Activated CD4-positive, alpha-beta T cell treated with anti-CD3 and anti-CD28 coated beads, Interleukin-2, amount 10 ng/mL, durations not matched to agents 7 days and 5 days (primary cell): ENCODE measurements at regions of chr6 and their contacts with region 1.

Region 1: GRCh38 chr6:90472744-90473143 is 114.1 kb downstream of the MAP3K7 start:
- DNase-seq: peak; percentile 74
- H3K4me3 Mint-ChIP-seq: peak overlapping the region; percentile 54
- H3K27ac Mint-ChIP-seq: peak overlapping the region; percentile 94
- H3K4me1 Mint-ChIP-seq: peaks cover 98% of the 10 kb centered on the region
- H3K27me3 Mint-ChIP-seq: peaks cover 3% of the 10 kb centered on the region

Region 2: GRCh38 chr6:90296346-90297114 is 176.2 kb before region 1 on chr6 and contains the start of gene BACH2:
- CTCF ChIA-PET with region 1: interaction called, 11 read pairs
- POLR2A ChIA-PET with region 1: no interaction called
- DNase-seq: peak; percentile 96
- H3K4me3 Mint-ChIP-seq: peak within 1 kb of the TSS; percentile 78
- H3K27ac Mint-ChIP-seq: peak within 1 kb of the TSS; percentile 96
- H3K4me1 Mint-ChIP-seq: peaks cover 27% of the 10 kb centered on the region
- H3K27me3 Mint-ChIP-seq: peaks cover 14% of the 10 kb centered on the region
- total RNA-seq, gene BACH2: 59.4 to 61.6 TPM

Region 3: GRCh38 chr6:90350689-90351554 is 121.8 kb before region 1 on chr6:
- CTCF ChIA-PET with region 1: no interaction called
- POLR2A ChIA-PET with region 1: no interaction called
- DNase-seq: peak; percentile 59
- H3K4me3 Mint-ChIP-seq: no peak overlapping the region
- H3K27ac Mint-ChIP-seq: peak overlapping the region; percentile 57
- H3K4me1 Mint-ChIP-seq: peaks cover 21% of the 10 kb centered on the region
- H3K27me3 Mint-ChIP-seq: peaks cover 3% of the 10 kb centered on the region